ENCODE measurements at regions of chr19 and their contacts with region 1.

Region 1: DNA sequence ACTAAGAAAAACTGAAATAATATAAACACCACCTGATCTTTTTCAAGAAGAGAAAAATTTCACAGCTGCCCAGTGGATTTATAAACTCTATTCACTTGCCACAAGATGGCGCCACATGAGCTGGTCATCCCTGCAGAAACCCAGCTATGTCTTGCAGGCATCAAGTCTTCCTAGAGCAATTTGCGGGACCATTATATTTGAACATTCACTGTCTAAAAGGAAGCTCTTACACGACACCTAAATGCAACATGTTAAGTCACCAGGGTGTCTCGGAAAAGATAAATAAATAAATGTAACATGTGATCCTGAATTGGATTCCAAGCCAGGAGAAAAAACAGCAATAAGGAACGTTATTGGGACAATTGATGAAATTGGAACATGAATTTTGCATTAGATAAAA is 20.3 kb upstream of the AKT2 start:
- DNase-seq: peak; percentile 87
- ATAC-seq: peak; percentile 76
- H3K4me3 Mint-ChIP-seq: no peak overlapping the region
- H3K27ac Mint-ChIP-seq: no peak overlapping the region
- H3K4me1 Mint-ChIP-seq: peaks cover 4% of the 10 kb centered on the region
- H3K27me3 Mint-ChIP-seq: no peaks in the 10 kb centered on the region

Region 2: DNA sequence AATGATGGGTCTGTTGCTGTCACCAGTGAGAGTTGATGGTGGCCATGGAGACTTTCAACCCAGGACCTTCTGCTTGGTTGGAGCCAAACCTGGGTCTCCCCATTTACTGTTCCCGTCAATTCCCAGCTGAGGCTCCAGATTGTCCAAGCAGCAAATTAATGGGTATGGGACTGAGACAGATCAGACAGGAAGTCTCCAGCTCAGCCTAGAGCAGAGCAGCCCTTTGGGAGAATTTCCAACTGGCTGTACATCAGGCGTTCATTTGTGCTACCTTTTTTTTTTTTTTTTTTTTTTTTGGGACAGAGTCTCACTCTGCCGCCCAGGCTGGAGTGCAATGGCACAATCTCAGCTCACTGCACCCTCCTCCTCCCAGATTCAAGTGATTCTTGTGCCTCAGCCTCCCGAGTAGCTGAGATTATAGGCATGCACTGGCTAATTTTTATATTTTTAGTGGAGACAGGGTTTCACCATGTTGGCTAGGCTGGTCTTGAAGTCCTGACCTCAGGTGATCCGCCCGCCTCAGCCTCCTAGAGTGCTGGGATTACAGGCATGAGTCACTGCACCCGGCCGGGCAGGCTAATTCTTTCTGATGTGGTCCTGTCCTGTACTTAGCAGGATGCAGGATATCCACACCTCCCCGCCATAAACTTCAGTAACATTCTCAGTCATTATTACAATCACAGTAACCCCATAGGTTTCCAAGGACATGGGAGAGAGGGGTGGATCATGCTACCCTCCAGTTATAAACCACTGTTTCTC is 104.9 kb before region 1 on chr19:
- CTCF ChIA-PET with region 1: no interaction called
- DNase-seq: no peak
- ATAC-seq: no peak
- H3K4me3 Mint-ChIP-seq: no peak overlapping the region
- H3K27ac Mint-ChIP-seq: no peak overlapping the region
- H3K4me1 Mint-ChIP-seq: no peaks in the 10 kb centered on the region
- H3K27me3 Mint-ChIP-seq: no peaks in the 10 kb centered on the region

Region 3: DNA sequence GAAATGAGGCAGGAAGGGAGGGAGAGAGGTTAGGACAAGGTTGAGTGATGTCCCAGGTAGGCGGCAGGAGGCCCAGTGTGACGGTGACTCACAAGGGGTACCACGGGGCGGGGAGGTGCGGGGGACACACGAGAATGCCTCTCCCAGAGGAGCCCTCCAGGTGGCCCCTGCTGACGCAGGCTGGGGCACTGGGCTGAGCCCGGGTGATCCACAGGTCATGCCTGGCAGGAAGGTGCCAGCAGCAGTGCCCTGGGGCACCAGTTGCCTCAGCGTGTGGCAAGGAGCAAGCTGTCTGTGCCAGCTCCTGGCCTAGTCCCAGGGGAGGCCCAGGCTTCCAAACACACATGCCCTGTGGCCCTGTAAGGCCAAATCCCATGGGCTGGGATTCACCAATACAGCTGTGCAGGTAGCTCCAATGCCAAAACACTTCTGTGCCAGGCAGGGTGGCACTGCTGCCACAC is 48.3 kb before region 1 on chr19:
- CTCF ChIA-PET with region 1: no interaction called
- DNase-seq: no peak
- ATAC-seq: no peak
- H3K4me3 Mint-ChIP-seq: no peak overlapping the region
- H3K27ac Mint-ChIP-seq: no peak overlapping the region
- H3K4me1 Mint-ChIP-seq: peaks cover 1% of the 10 kb centered on the region
- H3K27me3 Mint-ChIP-seq: no peaks in the 10 kb centered on the region

Region 4: DNA sequence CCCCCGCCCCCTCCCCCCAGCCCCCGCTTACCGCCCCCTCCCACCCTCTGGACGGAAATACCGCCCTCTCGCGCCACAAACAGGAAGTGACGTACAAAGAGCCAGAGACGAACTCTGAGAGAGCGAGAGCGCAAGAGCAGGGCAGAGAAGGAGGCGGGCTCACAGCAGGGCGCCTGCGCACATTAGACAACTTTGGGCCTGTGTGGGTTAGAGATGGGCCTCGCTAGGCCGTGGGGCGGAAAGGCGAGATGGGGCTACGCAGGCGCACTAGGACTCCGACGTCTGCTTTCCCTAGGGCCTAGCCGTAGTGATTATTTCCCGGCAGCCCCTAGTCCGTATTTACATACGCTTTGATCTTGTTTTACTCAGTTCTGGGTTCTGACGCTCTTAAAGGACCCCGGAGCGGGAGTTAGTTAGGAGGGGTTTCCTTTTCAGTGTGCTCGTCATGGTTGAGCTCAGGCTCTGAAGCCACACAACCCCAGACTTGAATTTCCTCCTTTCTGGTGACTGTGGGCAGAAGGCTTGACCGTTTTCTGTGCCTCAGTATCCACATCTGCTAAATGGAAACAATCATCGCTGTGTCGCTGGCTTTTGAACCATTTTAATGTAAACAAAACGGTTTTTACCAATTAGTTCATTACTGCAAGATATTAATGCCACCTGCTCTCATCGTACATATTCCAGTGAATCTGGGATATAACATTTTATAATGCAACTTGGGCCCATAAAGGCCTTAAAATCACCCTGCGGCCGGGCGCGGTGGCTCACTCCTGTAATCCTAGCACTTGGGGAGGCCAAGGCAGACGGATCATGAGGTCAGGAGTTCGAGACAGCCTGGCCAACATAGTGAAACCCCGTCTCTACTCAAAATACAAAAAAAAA is 19.8 kb before region 1 on chr19:
- CTCF ChIA-PET with region 1: interaction called, 13 read pairs
- DNase-seq: peak; percentile 99
- ATAC-seq: peak; percentile 92
- H3K4me3 Mint-ChIP-seq: peak overlapping the region; percentile 86
- H3K27ac Mint-ChIP-seq: peak overlapping the region; percentile 99
- H3K4me1 Mint-ChIP-seq: peaks cover 43% of the 10 kb centered on the region
- H3K27me3 Mint-ChIP-seq: no peaks in the 10 kb centered on the region

Region 5: DNA sequence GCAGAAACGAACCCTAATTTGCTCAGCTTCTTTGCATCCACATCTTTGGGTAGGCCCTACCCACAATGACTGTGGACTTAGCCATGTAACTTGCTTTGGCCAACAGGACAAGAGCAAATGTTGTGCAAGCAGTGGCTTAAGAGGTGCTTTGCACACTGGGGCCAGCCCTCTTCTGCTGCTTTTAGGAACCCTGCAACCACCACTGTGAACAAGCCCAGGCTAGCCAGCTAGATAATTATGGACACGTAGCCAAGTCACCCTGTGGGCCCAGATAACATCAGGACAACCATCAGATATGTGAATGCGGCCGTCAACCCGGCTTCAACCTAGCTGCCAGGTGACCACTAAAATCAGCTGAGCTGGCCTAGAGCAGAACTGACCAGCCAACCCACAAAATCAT is 25.7 kb after region 1 on chr19:
- CTCF ChIA-PET with region 1: interaction called, 10 read pairs
- DNase-seq: no peak
- ATAC-seq: no peak
- H3K4me3 Mint-ChIP-seq: no peak overlapping the region
- H3K27ac Mint-ChIP-seq: no peak overlapping the region
- H3K4me1 Mint-ChIP-seq: no peaks in the 10 kb centered on the region
- H3K27me3 Mint-ChIP-seq: no peaks in the 10 kb centered on the region

Region 6: DNA sequence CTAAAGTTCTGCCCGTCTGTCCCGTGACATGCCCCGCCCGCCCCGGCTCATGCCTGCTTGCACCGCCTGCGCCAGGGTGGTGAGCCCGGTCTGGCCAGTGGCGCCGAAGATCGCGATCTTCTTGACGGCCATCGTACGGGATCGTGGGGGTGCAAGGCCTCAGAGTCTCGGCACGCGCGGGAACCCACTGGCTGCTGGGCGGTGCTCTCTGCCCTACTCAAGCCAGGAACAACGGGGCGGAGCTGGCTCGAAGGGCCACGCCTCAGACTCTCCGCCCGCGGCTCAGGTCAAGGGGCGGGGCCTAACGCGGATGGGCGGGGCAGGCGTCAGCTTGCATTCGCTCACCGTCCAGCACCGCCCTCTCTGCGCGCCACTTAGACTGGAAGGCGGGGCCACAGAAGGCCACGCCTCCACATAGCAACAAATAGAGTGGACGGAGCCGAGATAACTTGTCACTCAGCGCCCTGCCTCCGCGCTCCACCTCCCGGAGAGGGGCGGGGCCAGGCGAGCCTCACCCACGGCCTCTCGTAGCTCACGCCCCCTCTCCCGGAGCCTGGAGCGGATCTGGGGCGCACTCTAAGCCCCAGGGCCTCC is 160.3 kb after region 1 on chr19 and contains the start of gene BLVRB:
- CTCF ChIA-PET with region 1: interaction called, 21 read pairs
- DNase-seq: peak; percentile 99
- ATAC-seq: peak; percentile 88
- H3K4me3 Mint-ChIP-seq: peak within 1 kb of the TSS; percentile 79
- H3K27ac Mint-ChIP-seq: peak within 1 kb of the TSS; percentile 85
- H3K4me1 Mint-ChIP-seq: peaks cover 34% of the 10 kb centered on the region
- H3K27me3 Mint-ChIP-seq: peaks cover 23% of the 10 kb centered on the region
- total RNA-seq, gene BLVRB: 12.9 to 23.3 TPM